Left cardiac atrium (tissue), 4 donors: ENCODE measurements at regions of chr14 and their contacts with region 1.

Region 1: GRCh38 chr14:61475316-61475715 is 153.9 kb downstream of the PRKCH start:
- DNase-seq: no peak
- ATAC-seq: no peak

Region 2: GRCh38 chr14:60839657-60840056 is 635.7 kb before region 1 on chr14:
- intact Hi-C with region 1: no loop called
- DNase-seq: no peak
- ATAC-seq: no peak

Region 3: DNA sequence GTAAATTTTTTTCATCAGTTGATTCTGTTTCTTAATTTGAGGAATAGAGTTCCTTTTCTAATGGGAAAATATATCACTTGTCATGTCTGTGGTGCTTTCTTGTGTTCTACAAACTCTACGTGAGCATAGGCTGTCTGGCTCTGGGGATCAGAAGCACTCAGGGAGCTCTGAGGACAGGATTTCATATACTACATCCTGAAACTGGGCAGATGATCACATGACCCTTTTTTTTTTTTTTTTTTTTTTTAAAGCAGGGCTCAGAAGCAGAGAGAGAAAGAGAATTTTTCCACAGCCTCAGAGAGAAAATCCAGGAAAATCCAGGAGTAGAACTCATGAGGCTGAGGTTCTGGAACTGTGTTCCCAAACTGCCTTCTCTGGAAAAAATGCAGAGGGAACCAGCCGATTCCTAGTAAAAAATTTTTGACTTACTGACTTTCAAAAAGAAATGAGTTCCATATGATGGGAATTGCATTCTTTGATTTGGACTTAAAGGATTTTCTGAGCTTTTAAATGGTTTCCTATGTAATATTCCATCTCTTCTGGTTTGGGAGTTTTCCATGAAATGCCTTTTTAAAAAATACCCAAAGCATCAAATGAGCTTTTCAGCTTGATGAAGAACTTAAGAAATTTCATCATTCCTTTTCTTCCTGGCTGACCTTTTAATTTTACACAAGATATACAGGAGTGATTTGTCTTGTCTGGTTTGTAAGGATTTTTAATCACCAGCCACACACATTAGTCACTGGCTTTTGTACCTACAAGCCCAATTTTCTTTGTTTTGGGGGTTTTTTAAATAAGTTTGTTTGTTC is 36.9 kb after region 1 on chr14:
- intact Hi-C with region 1: loop called (anchors 5 kb)
- DNase-seq: no peak
- ATAC-seq: peak in 1 of 2 donors; percentile 54

Region 4: DNA sequence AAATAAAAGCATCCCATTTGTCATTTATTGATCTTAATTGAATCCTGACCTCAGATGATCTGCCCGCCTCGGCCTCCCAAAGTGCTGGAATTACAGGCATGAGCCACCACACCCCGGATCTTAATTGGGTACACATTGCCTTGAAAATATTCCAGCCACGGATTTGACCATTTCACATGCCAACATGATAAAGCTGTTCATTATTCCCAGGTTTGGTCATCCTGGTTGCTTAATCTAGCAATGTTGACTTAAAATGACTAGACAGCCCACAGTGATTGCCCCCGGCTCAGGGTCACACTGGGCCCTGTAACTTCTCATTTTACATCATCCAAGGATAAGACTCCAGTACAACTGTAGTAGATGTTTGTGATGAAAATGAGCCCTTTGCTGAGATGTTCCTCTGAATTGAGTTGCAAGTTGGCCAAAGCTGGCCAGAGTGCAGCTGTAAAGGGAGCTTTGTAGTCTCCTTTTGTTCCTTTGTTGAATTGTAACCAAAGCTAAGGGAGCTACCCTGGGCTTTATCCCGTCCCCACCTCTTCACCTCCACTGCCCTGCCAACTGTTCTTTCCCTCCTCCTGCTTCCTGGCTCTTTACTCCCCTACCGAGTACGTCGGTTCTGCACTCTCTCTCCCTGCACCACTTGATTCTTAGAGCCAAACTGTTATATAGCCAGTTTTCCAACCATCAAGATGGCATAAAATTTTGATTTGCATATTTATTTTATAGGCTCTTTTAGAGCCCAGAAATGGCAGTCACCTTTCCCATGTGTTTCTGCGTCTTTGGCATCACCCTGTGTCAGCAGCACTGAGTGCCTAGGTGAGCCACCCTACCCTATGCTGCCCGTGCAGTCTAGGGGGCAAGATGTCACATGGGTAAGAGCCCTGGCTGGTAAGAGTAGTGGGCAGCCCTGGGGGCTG is 78.7 kb after region 1 on chr14:
- intact Hi-C with region 1: loop called in 1 of 2 experiments (anchors 5 kb)
- DNase-seq: no peak
- ATAC-seq: peak in 1 of 2 donors; percentile 53

Region 5: DNA sequence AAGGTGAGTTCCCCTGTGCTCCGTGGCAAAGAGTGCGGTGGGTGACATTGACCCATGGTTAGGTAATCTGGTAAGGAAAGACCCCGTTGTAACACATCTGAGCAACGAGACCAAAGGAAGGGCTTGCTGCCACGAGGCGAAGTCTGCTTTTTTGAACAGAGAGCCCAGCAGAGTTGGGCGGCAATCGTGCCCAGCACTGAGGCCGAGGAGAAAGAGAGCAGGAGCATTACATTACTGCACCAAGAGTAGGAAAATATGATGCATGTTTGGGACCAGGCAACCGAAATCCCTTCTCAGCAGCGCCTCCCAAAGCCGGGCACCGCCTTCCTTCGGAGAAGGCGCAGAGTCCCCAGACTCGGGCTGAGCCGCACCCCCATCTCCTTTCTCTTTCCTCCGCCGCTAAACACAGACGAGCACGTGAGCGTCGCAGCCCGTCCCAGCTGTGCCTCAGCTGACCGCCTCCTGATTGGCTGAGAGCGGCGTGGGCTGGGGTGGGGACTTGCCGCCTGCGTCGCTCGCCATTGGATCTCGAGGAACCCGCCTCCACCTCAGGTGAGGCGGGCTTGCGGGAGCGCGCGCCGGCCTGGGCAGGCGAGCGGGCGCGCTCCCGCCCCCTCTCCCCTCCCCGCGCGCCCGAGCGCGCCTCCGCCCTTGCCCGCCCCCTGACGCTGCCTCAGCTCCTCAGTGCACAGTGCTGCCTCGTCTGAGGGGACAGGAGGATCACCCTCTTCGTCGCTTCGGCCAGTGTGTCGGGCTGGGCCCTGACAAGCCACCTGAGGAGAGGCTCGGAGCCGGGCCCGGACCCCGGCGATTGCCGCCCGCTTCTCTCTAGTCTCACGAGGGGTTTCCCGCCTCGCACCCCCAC is 219.7 kb after region 1 on chr14 and contains the start of gene HIF1A:
- intact Hi-C with region 1: loop called in 1 of 2 experiments (anchors 2 kb)
- DNase-seq: peak; percentile 97
- ATAC-seq: peak; percentile 97 to 98
- total RNA-seq, gene HIF1A: 50.9 to 109 TPM

Region 6: DNA sequence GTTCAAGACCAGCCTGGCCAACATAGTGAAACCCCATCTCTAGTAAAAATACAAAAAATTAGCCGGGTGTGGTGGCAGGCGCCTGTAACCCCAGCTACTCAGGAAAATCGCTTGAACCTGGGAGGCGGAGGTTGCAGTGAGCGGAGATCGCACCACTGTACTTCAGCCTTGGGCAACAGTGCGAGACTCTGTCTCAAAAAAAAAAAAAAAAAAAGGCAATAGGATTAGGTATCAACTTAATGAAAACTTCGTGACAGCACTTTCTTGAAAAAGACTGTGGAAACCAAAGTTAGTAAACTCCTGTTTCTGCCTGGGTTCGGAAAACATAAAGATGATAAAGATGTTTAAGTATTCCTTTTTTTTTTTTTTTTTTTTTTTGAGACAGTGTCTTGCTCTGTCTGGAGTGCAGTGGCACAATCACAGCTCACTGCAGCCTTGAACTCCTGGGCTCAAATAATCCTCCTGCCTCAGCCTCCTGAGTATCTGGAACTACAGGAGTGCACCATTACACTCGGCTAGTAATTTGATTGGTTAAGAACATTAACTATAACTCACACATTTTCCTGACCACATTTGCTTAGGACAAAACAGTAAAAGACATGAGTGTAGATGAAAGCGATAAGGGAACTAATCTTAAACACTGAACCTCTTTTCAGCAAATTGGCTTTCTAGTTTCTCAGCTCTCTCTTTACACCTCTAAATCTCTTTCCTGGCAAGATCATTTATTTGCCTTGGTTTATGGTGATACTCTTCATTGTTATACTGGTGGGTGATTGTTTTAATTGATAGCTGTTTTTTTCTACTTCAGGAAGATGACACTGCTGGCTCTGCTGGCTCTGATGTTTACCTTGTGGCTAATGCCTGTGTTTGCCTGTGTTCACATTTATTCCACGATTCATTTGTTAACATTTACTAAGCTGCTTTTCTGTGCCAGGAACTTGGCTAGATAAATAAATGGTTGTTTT is 235.8 kb after region 1 on chr14:
- intact Hi-C with region 1: loop called in 1 of 2 experiments (anchors 5 kb)
- DNase-seq: no peak
- ATAC-seq: no peak

Region 7: GRCh38 chr14:61854898-61855297 is 379.6 kb after region 1 on chr14:
- intact Hi-C with region 1: no loop called
- DNase-seq: no peak
- ATAC-seq: no peak